SK-N-SH (cell line): ENCODE measurements at regions of chr16 and their contacts with region 1.

Region 1: GRCh38 chr16:27109666-27110523 is 43.2 kb downstream of the C16orf82 start:
- DNase-seq: peak; percentile 93
- H3K4me3 ChIP-seq: peak overlapping the region; percentile 37 to 60
- H3K27ac ChIP-seq: no peak overlapping the region
- H3K4me1 ChIP-seq: peaks cover 0 to 7% of the 10 kb centered on the region in 2 experiments; a peak in 1 of 4 replicates
- H3K27me3 ChIP-seq: no peaks in the 10 kb centered on the region; the same call in 1 of the 2 replicates
- CTCF ChIP-seq: peak; percentile 72
- EP300 ChIP-seq: no peak
- RAD21 ChIP-seq: peak; percentile 74

Region 2: GRCh38 chr16:26889740-26890139 is 220.2 kb before region 1 on chr16:
- CTCF ChIA-PET with region 1: no interaction called
- POLR2A ChIA-PET with region 1: no interaction called
- DNase-seq: no peak
- H3K4me3 ChIP-seq: no peak overlapping the region
- H3K27ac ChIP-seq: no peak overlapping the region
- H3K4me1 ChIP-seq: no peaks in the 10 kb centered on the region; a peak in 1 of 4 replicates
- H3K27me3 ChIP-seq: no peaks in the 10 kb centered on the region
- CTCF ChIP-seq: no peak
- EP300 ChIP-seq: no peak
- RAD21 ChIP-seq: no peak

Region 3: GRCh38 chr16:27097800-27098230 is 12.1 kb before region 1 on chr16:
- CTCF ChIA-PET with region 1: interaction called, 11 read pairs
- POLR2A ChIA-PET with region 1: no interaction called
- DNase-seq: no peak
- H3K4me3 ChIP-seq: no peak overlapping the region
- H3K27ac ChIP-seq: no peak overlapping the region
- H3K4me1 ChIP-seq: no peaks in the 10 kb centered on the region
- H3K27me3 ChIP-seq: no peaks in the 10 kb centered on the region
- CTCF ChIP-seq: no peak
- EP300 ChIP-seq: no peak
- RAD21 ChIP-seq: no peak

Region 4: GRCh38 chr16:27123795-27124409 is 14.0 kb after region 1 on chr16:
- CTCF ChIA-PET with region 1: interaction called, 15 read pairs
- POLR2A ChIA-PET with region 1: no interaction called
- DNase-seq: no peak
- H3K4me3 ChIP-seq: no peak overlapping the region
- H3K27ac ChIP-seq: no peak overlapping the region
- H3K4me1 ChIP-seq: peaks cover 0 to 4% of the 10 kb centered on the region in 2 experiments; a peak in 1 of 4 replicates
- H3K27me3 ChIP-seq: no peaks in the 10 kb centered on the region
- CTCF ChIP-seq: no peak
- EP300 ChIP-seq: no peak
- RAD21 ChIP-seq: no peak